ENCODE measurements at regions of chr6 and their contacts with region 1.

Region 1: GRCh38 chr6:27177485-27178406 is 69.8 kb upstream of the PRSS16 start:
- DNase-seq: peak; percentile 86
- ATAC-seq: peak; percentile 89
- H3K4me3 Mint-ChIP-seq: peak overlapping the region; percentile 88
- H3K27ac Mint-ChIP-seq: peak overlapping the region; percentile 87
- H3K4me1 Mint-ChIP-seq: peaks cover 2% of the 10 kb centered on the region
- H3K27me3 Mint-ChIP-seq: no peaks in the 10 kb centered on the region

Region 2: GRCh38 chr6:25556516-25556915 is 1621.2 kb before region 1 on chr6:
- CTCF ChIA-PET with region 1: no interaction called
- POLR2A ChIA-PET with region 1: no interaction called
- intact Hi-C with region 1: no loop called
- DNase-seq: peak; percentile 90
- ATAC-seq: peak; percentile 66
- H3K4me3 Mint-ChIP-seq: no peak overlapping the region
- H3K27ac Mint-ChIP-seq: no peak overlapping the region
- H3K4me1 Mint-ChIP-seq: peaks cover 2% of the 10 kb centered on the region
- H3K27me3 Mint-ChIP-seq: no peaks in the 10 kb centered on the region

Region 3: DNA sequence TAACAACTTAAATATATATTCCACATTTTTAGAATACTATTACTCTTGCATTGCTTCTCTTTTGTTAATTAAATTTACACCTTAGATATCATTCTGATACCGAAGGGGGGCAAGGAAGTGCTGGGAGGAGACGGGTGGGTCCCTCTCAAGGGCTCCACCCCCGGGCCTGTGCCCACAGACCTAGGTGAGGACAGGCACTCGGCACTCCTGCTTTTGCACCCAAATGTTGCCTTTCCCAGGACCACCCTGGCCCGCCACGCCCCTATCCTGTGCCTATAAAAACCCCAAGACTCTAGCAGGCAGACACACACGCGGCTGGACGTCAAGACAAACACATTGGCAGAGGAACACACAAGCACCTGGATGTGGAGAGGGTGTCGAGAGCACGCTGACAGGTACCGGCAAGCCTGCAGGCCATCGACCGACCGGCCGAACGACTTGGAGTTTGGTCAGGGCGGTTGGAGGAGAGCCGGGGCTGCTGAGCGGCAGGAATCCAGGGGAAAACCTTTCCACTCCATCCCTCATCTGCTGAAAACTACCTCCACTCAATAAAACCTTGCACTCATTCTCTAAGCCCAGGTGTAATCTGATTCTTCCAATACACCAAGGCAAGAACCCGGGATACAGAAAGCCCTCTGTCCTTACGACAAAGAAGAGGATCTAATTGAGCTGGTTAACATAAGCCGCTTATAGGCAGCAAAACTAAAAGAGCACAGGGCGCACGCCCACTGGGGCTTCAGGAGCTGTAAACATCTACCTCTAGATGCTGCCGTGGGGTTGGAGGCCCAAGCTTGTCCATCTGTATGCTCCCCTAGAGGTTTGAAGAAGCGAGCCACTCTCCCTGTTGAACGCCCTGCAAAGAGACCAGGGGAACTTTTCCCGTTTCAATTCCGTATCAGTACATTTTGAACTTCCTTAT is 127.6 kb before region 1 on chr6:
- CTCF ChIA-PET with region 1: no interaction called
- POLR2A ChIA-PET with region 1: no interaction called
- intact Hi-C with region 1: no loop called
- DNase-seq: no peak
- ATAC-seq: no peak
- H3K4me3 Mint-ChIP-seq: no peak overlapping the region
- H3K27ac Mint-ChIP-seq: no peak overlapping the region
- H3K4me1 Mint-ChIP-seq: no peaks in the 10 kb centered on the region
- H3K27me3 Mint-ChIP-seq: peaks cover 11% of the 10 kb centered on the region

Region 4: GRCh38 chr6:27126815-27127537 is 50.8 kb before region 1 on chr6:
- CTCF ChIA-PET with region 1: interaction called, 3 read pairs
- POLR2A ChIA-PET with region 1: interaction called, 14 read pairs
- intact Hi-C with region 1: loop called in 1 of 2 experiments (anchors 2 kb)
- DNase-seq: peak; percentile 89
- ATAC-seq: peak; percentile 74
- H3K4me3 Mint-ChIP-seq: peak overlapping the region; percentile 68
- H3K27ac Mint-ChIP-seq: peak overlapping the region; percentile 67
- H3K4me1 Mint-ChIP-seq: peaks cover 20% of the 10 kb centered on the region
- H3K27me3 Mint-ChIP-seq: no peaks in the 10 kb centered on the region

Region 5: GRCh38 chr6:27188885-27189418 is 11.2 kb after region 1 on chr6:
- CTCF ChIA-PET with region 1: interaction called, 5 read pairs
- POLR2A ChIA-PET with region 1: no interaction called
- intact Hi-C with region 1: loop called in 1 of 2 experiments (anchors 1 kb)
- DNase-seq: peak; percentile 75
- ATAC-seq: peak; percentile 89
- H3K4me3 Mint-ChIP-seq: peak overlapping the region; percentile 81
- H3K27ac Mint-ChIP-seq: peak overlapping the region; percentile 76
- H3K4me1 Mint-ChIP-seq: peaks cover 10% of the 10 kb centered on the region
- H3K27me3 Mint-ChIP-seq: peaks cover 2% of the 10 kb centered on the region

Region 6: DNA sequence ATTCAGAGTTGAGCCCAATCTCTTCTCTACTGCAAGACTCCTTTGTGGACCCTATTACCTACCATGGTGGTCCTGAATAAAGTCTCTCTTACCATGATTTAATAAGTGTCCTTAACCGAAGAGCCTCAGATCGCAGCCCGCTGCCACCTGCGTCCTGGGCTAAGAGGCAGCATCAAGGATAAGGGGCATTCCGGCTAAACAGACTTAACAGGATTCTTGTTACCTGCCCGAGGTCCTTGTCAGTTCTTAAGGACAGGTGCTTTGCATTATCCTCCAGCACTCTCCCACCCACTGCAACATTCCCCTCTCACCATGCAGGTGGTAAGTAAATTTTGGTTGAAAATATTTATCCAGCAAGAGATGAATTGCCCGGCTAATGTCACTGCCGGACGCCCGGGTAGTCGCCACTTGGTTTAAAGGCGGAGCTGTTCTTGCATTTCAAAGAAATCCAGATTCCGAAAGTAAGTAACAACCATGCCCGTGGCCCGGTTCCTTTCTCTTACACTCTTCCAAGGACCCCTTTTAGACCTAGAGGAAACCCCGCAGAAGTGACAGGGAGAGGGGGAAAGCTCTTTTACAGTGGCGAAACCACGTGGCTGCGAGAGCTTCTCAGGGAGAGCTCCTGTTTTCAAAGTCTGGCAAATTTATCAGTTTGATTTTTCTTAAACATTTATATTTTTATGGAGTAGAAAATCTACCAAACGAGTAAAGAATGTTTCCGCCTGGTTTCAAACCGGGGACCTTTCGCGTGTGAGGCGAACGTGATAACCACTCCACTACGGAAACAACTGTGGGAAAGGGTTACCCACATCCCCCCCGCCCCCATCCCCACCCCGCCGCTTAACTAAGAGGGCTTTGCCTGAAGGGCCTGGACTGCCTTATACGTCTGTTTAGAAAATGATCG is 27.9 kb after region 1 on chr6:
- CTCF ChIA-PET with region 1: no interaction called
- POLR2A ChIA-PET with region 1: no interaction called
- intact Hi-C with region 1: no loop called
- DNase-seq: peak; percentile 56
- ATAC-seq: no peak
- H3K4me3 Mint-ChIP-seq: peak overlapping the region; percentile 39
- H3K27ac Mint-ChIP-seq: no peak overlapping the region
- H3K4me1 Mint-ChIP-seq: peaks cover 11% of the 10 kb centered on the region
- H3K27me3 Mint-ChIP-seq: peaks cover 34% of the 10 kb centered on the region

Region 7: DNA sequence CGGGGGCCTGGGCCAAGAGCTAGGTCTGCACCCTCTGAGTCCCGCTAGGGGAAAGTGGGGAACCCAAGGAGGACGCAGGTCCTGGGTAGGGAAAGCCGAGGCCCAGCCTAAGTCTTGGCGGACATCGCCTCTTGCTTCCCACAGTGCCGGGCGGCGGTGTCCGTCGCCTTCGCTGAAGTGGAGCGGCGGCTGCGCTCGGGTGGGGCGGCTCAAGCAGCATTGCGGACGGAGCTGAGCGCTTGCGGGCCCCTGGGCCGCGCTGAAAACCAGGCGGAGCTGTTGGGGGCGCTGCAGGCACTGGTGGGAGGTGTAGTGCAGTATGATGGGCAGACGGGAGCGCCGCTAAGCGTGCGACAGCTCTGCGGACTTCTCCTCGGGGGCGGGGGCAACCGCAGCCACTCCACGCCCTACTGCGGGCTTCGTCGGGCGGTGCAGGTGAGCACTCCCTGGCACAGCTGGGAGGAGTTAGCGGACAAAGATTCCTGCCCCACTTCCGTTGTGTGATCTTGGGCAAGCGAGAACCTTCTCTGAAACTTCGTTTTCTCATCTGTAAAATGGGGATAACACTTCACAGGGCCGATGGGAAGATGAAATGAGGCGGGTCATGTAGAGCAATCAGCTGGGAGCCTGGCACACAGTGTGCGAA is 74.0 kb after region 1 on chr6:
- CTCF ChIA-PET with region 1: no interaction called
- POLR2A ChIA-PET with region 1: no interaction called
- intact Hi-C with region 1: loop called in 1 of 2 experiments (anchors 1 kb)
- DNase-seq: peak; percentile 88
- ATAC-seq: peak; percentile 96
- H3K4me3 Mint-ChIP-seq: peak overlapping the region; percentile 80
- H3K27ac Mint-ChIP-seq: no peak overlapping the region
- H3K4me1 Mint-ChIP-seq: peaks cover 10% of the 10 kb centered on the region
- H3K27me3 Mint-ChIP-seq: peaks cover 52% of the 10 kb centered on the region

Region 8: GRCh38 chr6:27479319-27480182 is 301.8 kb after region 1 on chr6:
- CTCF ChIA-PET with region 1: interaction called, 9 read pairs
- POLR2A ChIA-PET with region 1: interaction called, 5 read pairs
- intact Hi-C with region 1: loop called (anchors 1 to 2 kb)
- DNase-seq: peak; percentile 89
- ATAC-seq: peak; percentile 69
- H3K4me3 Mint-ChIP-seq: no peak overlapping the region
- H3K27ac Mint-ChIP-seq: no peak overlapping the region
- H3K4me1 Mint-ChIP-seq: peaks cover 6% of the 10 kb centered on the region
- H3K27me3 Mint-ChIP-seq: no peaks in the 10 kb centered on the region

Region 9: GRCh38 chr6:27608916-27609883 is 431.5 kb after region 1 on chr6:
- CTCF ChIA-PET with region 1: no interaction called
- POLR2A ChIA-PET with region 1: no interaction called
- intact Hi-C with region 1: loop called (anchors 5 to 10 kb)
- DNase-seq: no peak
- ATAC-seq: no peak
- H3K4me3 Mint-ChIP-seq: no peak overlapping the region
- H3K27ac Mint-ChIP-seq: no peak overlapping the region
- H3K4me1 Mint-ChIP-seq: peaks cover 13% of the 10 kb centered on the region
- H3K27me3 Mint-ChIP-seq: peaks cover 46% of the 10 kb centered on the region

Region 10: GRCh38 chr6:27902335-27903314 is 724.9 kb after region 1 on chr6:
- CTCF ChIA-PET with region 1: interaction called, 3 read pairs
- POLR2A ChIA-PET with region 1: no interaction called
- intact Hi-C with region 1: loop called (anchors 2 to 5 kb)
- DNase-seq: peak; percentile 91
- ATAC-seq: peak; percentile 81
- H3K4me3 Mint-ChIP-seq: peak overlapping the region; percentile 74
- H3K27ac Mint-ChIP-seq: peak overlapping the region; percentile 89
- H3K4me1 Mint-ChIP-seq: peaks cover 5% of the 10 kb centered on the region
- H3K27me3 Mint-ChIP-seq: peaks cover 4% of the 10 kb centered on the region

Measured in activated CD4-positive, alpha-beta T cell treated with anti-CD3 and anti-CD28 coated beads for 36 hours (primary cell).